ENCODE measurements at regions of chr4 and their contacts with region 1.

Region 1: GRCh38 chr4:47933840-47934239 is 19.5 kb upstream of the NFXL1 start:
- DNase-seq: peak; percentile 64
- H3K4me3 ChIP-seq: no peak overlapping the region
- H3K27ac ChIP-seq: no peak overlapping the region
- H3K4me1 ChIP-seq: no peaks in the 10 kb centered on the region
- CTCF ChIP-seq: peak; percentile 91

Region 2: GRCh38 chr4:47668810-47669408 is 264.9 kb before region 1 on chr4:
- CTCF ChIA-PET with region 1: no interaction called
- POLR2A ChIA-PET with region 1: no interaction called
- intact Hi-C with region 1: loop called (anchors 5 kb)
- DNase-seq: peak; percentile 39
- H3K4me3 ChIP-seq: no peak overlapping the region
- H3K27ac ChIP-seq: no peak overlapping the region
- H3K4me1 ChIP-seq: no peaks in the 10 kb centered on the region
- CTCF ChIP-seq: peak; percentile 84

Region 3: DNA sequence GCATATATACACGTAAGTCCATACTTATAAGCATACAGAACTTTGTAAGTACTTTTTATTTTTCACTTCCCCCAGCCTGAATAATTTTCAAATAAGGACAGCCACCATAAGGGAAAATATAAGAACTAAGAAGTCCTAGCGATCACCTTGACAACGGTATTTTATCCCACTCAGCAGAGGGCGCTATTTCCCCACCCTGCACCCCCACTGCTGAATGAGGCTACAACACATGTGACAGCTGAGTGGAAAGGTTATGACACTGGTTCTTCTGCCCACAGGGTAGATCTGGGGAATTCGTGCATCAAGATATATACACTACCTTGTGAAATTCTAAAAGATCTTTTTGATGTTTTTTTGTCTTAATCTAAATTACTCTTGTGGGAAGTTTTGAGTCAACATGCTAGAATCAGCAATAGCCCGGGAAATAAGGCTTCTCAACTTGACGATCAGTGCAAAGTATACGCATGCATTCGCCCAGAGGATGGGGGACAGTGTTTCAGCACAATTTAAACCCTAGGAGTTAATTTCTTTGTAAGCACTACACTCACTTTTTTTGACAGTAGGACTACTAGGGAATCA is 247.5 kb before region 1 on chr4:
- CTCF ChIA-PET with region 1: no interaction called
- POLR2A ChIA-PET with region 1: no interaction called
- intact Hi-C with region 1: loop called (anchors 1 kb)
- DNase-seq: peak; percentile 56
- H3K4me3 ChIP-seq: no peak overlapping the region
- H3K27ac ChIP-seq: no peak overlapping the region
- H3K4me1 ChIP-seq: no peaks in the 10 kb centered on the region
- CTCF ChIP-seq: peak; percentile 96

Region 4: DNA sequence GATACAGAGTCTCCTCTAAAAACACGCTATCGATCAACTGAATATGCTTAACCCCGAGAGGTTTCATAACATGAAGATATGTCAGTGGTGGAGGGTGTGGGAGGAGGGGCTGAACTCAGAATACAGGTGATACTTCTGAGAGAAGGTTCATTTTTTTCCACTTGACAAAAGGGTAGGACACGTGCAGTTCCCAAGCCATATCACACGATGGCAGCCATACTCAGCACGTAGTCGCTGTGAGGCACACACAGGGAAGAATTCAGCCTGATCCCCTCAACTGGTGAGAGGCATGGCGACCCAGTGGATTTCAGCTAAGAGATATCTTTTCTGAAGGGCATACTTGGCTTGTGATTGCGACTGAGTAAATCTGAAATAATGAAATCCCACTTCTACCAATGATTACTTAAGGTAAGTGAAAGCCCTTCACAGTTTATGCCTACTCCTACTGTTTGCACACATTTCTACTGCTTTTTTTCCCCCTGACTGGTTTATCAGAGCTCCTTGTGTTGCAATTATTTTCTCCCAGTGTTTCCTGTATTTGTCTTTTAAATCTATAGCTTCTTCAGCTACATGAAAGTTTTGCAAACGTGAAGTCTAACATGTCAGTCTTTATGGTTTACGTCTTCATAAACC is 229.0 kb before region 1 on chr4:
- CTCF ChIA-PET with region 1: no interaction called
- POLR2A ChIA-PET with region 1: no interaction called
- intact Hi-C with region 1: loop called (anchors 1 kb)
- DNase-seq: peak; percentile 46
- H3K4me3 ChIP-seq: no peak overlapping the region
- H3K27ac ChIP-seq: no peak overlapping the region
- H3K4me1 ChIP-seq: no peaks in the 10 kb centered on the region
- CTCF ChIP-seq: peak; percentile 66

Region 5: DNA sequence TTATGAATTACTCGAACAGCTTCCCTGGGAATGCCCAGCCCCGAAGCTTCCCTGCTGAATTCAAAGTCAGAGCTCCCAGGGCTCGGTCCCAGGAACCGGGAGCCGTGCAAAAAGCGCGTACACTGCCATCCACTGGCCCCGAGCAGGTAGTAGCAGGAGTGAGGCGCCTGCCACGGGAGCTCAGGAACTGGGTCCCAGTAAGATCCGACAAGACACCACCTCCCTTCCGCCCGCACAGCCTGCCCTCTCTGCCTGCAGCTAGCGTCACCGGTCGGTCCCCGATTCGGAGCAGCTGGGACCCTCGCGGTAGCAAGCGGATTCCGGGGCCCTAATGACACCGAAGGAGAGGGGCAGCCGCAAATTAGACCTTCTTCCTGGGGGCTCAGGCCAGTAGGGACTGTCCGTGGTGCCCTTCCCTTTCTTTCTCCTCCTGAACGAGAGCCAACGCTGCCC is 97.2 kb before region 1 on chr4:
- CTCF ChIA-PET with region 1: no interaction called
- POLR2A ChIA-PET with region 1: no interaction called
- intact Hi-C with region 1: loop called (anchors 5 kb)
- DNase-seq: peak; percentile 73
- H3K4me3 ChIP-seq: peak overlapping the region; percentile 68
- H3K27ac ChIP-seq: no peak overlapping the region
- H3K4me1 ChIP-seq: peaks cover 9% of the 10 kb centered on the region
- CTCF ChIP-seq: peak; percentile 76

Region 6: GRCh38 chr4:48906206-48907173 is 972.6 kb after region 1 on chr4 and contains the start of gene OCIAD2:
- CTCF ChIA-PET with region 1: no interaction called
- POLR2A ChIA-PET with region 1: no interaction called
- intact Hi-C with region 1: no loop called
- DNase-seq: peak; percentile 92
- H3K4me3 ChIP-seq: peak within 1 kb of the TSS; percentile 88
- H3K27ac ChIP-seq: peak within 1 kb of the TSS; percentile 36
- H3K4me1 ChIP-seq: peaks cover 28% of the 10 kb centered on the region
- CTCF ChIP-seq: peak; percentile 69
- total RNA-seq, gene OCIAD2: 102 and 125 TPM in 2 replicates

Measured in OCI-LY7 (cell line).